K562 (cell line): ENCODE measurements at regions of chr14 and their contacts with region 1.

Region 1: GRCh38 chr14:77040059-77040740 is 11.7 kb upstream of the IRF2BPL start:
- DNase-seq: peak; percentile 76 to 98 (median 82)
- ATAC-seq: peak; percentile 83
- H3K4me3 ChIP-seq: peak overlapping the region; percentile 30
- H3K27ac ChIP-seq: peak overlapping the region; percentile 96
- H3K4me1 ChIP-seq: peaks cover 56 to 73% of the 10 kb centered on the region in 2 experiments
- H3K27me3 ChIP-seq: no peaks in the 10 kb centered on the region
- CTCF ChIP-seq: no peak
- EP300 ChIP-seq: peak; percentile 88
- POLR2A ChIP-seq: peak; percentile 64
- RAD21 ChIP-seq: peak; percentile 5 to 17; a peak in 1 of 4 replicates

Region 2: GRCh38 chr14:76962303-76962660 is 77.9 kb before region 1 on chr14:
- CTCF ChIA-PET with region 1: no interaction called
- POLR2A ChIA-PET with region 1: interaction called, 4 read pairs
- in situ Hi-C with region 1: no loop called
- intact Hi-C with region 1: loop called (anchors 5 kb)
- DNase-seq: peak in 1 of 4 experiments; percentile 17
- ATAC-seq: no peak
- H3K4me3 ChIP-seq: peak overlapping the region; percentile 23; the same call in 1 of the 2 replicates
- H3K27ac ChIP-seq: peak overlapping the region; percentile 94
- H3K4me1 ChIP-seq: peaks cover 44 to 47% of the 10 kb centered on the region in 2 experiments
- H3K27me3 ChIP-seq: no peaks in the 10 kb centered on the region
- CTCF ChIP-seq: no peak
- EP300 ChIP-seq: no peak
- POLR2A ChIP-seq: no peak
- RAD21 ChIP-seq: no peak

Region 3: GRCh38 chr14:77028384-77029231 is 11.6 kb before region 1 on chr14 and contains the start of gene IRF2BPL:
- CTCF ChIA-PET with region 1: interaction called, 3 read pairs
- POLR2A ChIA-PET with region 1: interaction called, 19 read pairs
- in situ Hi-C with region 1: no loop called
- intact Hi-C with region 1: loop called (anchors 1 kb)
- DNase-seq: peak; percentile 91 to 96 (median 94)
- ATAC-seq: peak; percentile 80
- H3K4me3 ChIP-seq: peak within 1 kb of the TSS; percentile 65
- H3K27ac ChIP-seq: peak within 1 kb of the TSS; percentile 95
- H3K4me1 ChIP-seq: peaks cover 16 to 62% of the 10 kb centered on the region in 2 experiments; a peak in 4 of 5 replicates
- H3K27me3 ChIP-seq: no peaks in the 10 kb centered on the region
- CTCF ChIP-seq: no peak
- EP300 ChIP-seq: no peak
- POLR2A ChIP-seq: no peak; the same call in 1 of the 2 replicates
- RAD21 ChIP-seq: 0 out of 4 replicates have a peak, but pooled peaks of 1 of the 2 experiments have one; percentile 6
- polyA plus RNA-seq, gene IRF2BPL: 0.52 to 0.75 TPM

Region 4: DNA sequence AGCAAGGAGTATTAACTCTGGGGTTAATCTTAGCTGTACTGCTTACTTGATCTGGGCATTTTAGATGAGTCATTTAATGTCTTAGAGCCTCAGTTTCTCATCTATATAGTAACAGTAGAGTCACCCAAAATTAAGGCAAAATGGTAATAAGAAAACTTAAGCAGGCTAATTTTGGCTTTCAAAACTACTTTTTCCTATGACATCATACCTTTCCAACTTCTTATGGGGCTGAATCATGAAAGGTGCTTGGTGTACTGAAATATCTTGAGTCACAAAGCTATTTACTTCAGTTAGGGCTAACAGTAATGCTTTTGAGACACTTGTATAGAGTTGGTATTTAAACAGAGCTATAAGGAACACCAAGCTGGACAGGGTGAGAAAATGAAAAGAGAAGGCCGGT is 664.5 kb after region 1 on chr14:
- CTCF ChIA-PET with region 1: no interaction called
- POLR2A ChIA-PET with region 1: no interaction called
- in situ Hi-C with region 1: no loop called
- intact Hi-C with region 1: no loop called
- DNase-seq: no peak
- ATAC-seq: no peak
- H3K4me3 ChIP-seq: no peak overlapping the region
- H3K27ac ChIP-seq: no peak overlapping the region
- H3K4me1 ChIP-seq: peaks cover 0 to 6% of the 10 kb centered on the region in 2 experiments; a peak in 1 of 5 replicates
- H3K27me3 ChIP-seq: no peaks in the 10 kb centered on the region
- CTCF ChIP-seq: no peak
- EP300 ChIP-seq: no peak
- POLR2A ChIP-seq: no peak
- RAD21 ChIP-seq: no peak